ENCODE measurements at regions of chr22 and their contacts with region 1.

Region 1: GRCh38 chr22:29040385-29041275 is 21.0 kb downstream of the C22orf31 start:
- DNase-seq: peak; percentile 36
- ATAC-seq: peak; percentile 92
- H3K4me3 ChIP-seq: no peak overlapping the region
- H3K27ac ChIP-seq: no peak overlapping the region
- H3K4me1 ChIP-seq: no peaks in the 10 kb centered on the region
- H3K27me3 ChIP-seq: no peaks in the 10 kb centered on the region
- CTCF ChIP-seq: peak; percentile 92 to 98 (median 94)
- EP300 ChIP-seq: no peak
- POLR2A ChIP-seq: no peak
- RAD21 ChIP-seq: peak; percentile 97

Region 2: GRCh38 chr22:28034760-28035401 is 1005.7 kb before region 1 on chr22:
- CTCF ChIA-PET with region 1: no interaction called
- POLR2A ChIA-PET with region 1: no interaction called
- RAD21 ChIA-PET with region 1: no interaction called
- SMC1A ChIA-PET with region 1: no interaction called
- in situ Hi-C with region 1: loop called (anchors 25 kb)
- intact Hi-C with region 1: no loop called
- DNase-seq: no peak
- ATAC-seq: no peak
- H3K4me3 ChIP-seq: no peak overlapping the region
- H3K27ac ChIP-seq: no peak overlapping the region
- H3K4me1 ChIP-seq: no peaks in the 10 kb centered on the region
- H3K27me3 ChIP-seq: peaks cover 2% of the 10 kb centered on the region in 2 experiments; a peak in 2 of 4 replicates
- CTCF ChIP-seq: no peak
- EP300 ChIP-seq: no peak
- POLR2A ChIP-seq: no peak
- RAD21 ChIP-seq: no peak

Region 3: DNA sequence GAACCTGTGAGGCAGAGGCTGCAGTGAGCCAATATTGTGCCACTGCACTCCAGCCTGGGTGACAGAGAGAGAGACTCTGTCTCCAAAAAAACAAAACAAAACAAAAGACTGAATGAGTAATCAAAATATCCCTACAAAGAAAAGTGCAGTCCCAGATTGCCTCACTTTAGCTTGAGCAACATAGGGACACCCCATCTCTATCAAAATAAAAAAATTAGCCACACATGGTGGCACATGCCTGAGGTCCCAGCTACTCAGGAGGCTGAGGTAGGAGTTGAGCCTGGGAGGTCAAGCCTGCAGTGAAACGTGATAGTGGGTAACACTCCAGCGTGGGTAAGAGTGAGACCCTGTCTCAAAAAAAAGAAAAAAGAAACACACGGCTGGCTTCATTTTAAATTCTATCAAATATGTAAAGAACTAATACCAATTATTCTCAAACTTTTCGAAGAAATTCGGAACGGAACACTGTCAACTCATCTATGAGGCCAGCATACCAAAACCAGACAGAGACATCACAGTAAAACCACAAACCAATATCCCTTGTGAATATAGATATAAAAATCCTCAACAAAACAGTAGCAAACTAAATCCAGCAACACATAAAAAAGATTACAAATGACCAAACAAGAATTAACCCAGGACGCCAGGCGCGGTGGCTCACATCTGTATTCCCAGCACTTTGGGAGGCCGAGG is 311.9 kb before region 1 on chr22:
- CTCF ChIA-PET with region 1: no interaction called
- POLR2A ChIA-PET with region 1: no interaction called
- RAD21 ChIA-PET with region 1: no interaction called
- SMC1A ChIA-PET with region 1: no interaction called
- in situ Hi-C with region 1: no loop called
- intact Hi-C with region 1: no loop called
- DNase-seq: no peak
- ATAC-seq: no peak
- H3K4me3 ChIP-seq: no peak overlapping the region
- H3K27ac ChIP-seq: no peak overlapping the region
- H3K4me1 ChIP-seq: no peaks in the 10 kb centered on the region
- H3K27me3 ChIP-seq: no peaks in the 10 kb centered on the region
- CTCF ChIP-seq: no peak
- EP300 ChIP-seq: no peak
- POLR2A ChIP-seq: no peak
- RAD21 ChIP-seq: no peak

Region 4: DNA sequence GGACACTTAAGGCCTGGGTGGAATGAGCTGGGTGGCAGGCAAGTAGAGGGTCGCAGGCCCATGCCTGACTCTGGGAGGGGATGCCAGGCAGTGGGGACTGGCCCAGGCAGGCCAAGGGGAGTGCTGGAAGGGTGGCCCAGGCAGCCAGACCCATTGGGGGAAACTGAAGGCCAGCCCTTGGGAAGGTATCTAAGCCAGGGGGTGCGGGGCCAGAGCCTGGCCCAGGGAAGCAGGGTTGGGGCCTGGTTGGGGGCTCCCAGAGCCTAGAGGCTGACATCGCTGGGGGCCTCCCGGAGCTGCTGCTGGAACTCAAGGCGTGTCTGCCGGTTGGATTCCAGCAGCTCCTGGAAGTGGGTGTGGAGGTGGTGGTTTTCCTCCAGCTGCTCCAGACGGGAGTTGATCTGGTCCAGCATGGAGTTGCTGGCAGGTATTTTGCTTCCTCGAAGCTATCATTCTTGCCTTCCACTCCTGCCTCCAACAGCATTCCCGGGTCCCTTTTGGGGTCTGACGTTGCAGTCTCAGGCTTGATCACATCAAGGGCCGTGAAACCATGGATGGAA is 204.9 kb before region 1 on chr22:
- CTCF ChIA-PET with region 1: interaction called, 41 read pairs
- POLR2A ChIA-PET with region 1: no interaction called
- RAD21 ChIA-PET with region 1: interaction called, 6 read pairs
- SMC1A ChIA-PET with region 1: interaction called, 96 read pairs
- in situ Hi-C with region 1: no loop called
- intact Hi-C with region 1: no loop called
- DNase-seq: no peak
- ATAC-seq: no peak
- H3K4me3 ChIP-seq: no peak overlapping the region
- H3K27ac ChIP-seq: no peak overlapping the region
- H3K4me1 ChIP-seq: no peaks in the 10 kb centered on the region
- H3K27me3 ChIP-seq: no peaks in the 10 kb centered on the region
- CTCF ChIP-seq: no peak
- EP300 ChIP-seq: no peak
- POLR2A ChIP-seq: no peak
- RAD21 ChIP-seq: no peak

Region 5: DNA sequence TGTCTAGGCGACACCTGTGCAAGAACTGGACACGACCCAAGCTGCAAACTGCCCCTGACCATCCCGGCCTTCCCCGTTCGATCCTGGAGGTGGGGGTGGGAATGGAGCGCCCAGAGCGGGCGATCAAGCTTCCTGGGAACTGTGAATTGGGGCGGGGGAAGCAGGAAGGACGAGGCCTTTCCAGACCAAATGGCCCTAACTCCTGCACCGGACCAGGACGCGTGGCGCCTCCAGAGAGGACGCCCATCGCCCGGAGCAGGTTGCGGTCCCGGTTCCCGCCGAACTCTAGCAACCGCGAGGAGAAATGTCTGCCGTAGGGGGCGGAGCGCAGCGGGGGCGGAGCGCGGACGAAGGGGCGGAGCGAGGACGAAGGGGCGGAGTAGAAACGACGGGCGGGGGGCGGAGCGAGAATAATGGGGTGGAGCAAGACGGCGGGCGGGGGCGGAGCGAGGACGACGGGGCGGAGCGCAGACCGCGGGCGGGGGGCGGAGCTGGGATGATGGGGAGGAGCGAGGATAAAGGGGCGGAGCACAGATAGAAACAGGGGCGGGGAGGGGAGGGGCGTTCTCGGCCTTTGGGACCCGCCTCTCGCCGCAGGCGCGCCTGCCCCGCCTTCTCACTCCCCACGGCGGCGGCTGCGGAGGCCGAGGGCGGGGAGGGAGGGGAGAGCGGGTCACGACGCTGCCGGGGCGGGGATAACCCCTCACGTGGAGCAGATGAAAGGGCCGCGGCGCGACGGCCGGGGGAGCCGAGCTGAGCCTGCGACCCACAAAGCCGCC is 157.6 kb before region 1 on chr22 and contains the start of gene ZNRF3:
- CTCF ChIA-PET with region 1: interaction called, 36 read pairs
- POLR2A ChIA-PET with region 1: interaction called, 6 read pairs
- RAD21 ChIA-PET with region 1: interaction called, 18 read pairs
- SMC1A ChIA-PET with region 1: interaction called, 21 read pairs
- in situ Hi-C with region 1: no loop called
- intact Hi-C with region 1: no loop called
- DNase-seq: no peak
- ATAC-seq: peak; percentile 89
- H3K4me3 ChIP-seq: peak within 1 kb of the TSS; percentile 57; the same call in 1 of the 2 replicates
- H3K27ac ChIP-seq: no peak within 1 kb of the TSS
- H3K4me1 ChIP-seq: no peaks in the 10 kb centered on the region
- H3K27me3 ChIP-seq: peaks cover 0 to 5% of the 10 kb centered on the region in 2 experiments; a peak in 1 of 4 replicates
- CTCF ChIP-seq: no peak
- EP300 ChIP-seq: no peak
- POLR2A ChIP-seq: peak; percentile 50; the same call in 1 of the 2 replicates
- RAD21 ChIP-seq: no peak
- polyA plus RNA-seq, gene ZNRF3: 0.10 to 0.13 TPM

Region 6: DNA sequence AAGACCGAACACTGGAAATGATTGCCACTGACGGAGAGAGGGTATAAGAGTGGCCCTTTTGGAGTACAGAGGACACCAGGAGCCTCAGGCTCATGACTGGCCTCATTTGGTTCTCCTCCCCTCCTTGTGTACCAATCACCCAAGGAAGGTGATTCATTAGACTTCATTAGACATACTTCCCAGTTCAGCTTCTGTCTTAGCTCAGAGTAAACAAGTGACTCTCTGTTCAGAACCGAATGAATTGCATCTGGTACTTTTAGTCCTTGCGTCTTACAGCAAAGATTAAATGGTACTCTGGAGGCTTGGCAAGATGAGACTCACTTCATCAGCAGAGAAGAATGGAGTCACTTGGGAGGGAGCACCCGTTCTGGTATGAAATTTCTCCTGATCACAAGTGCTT is 82.0 kb before region 1 on chr22:
- CTCF ChIA-PET with region 1: interaction called, 18 read pairs
- POLR2A ChIA-PET with region 1: interaction called, 3 read pairs
- RAD21 ChIA-PET with region 1: interaction called, 6 read pairs
- SMC1A ChIA-PET with region 1: interaction called, 7 read pairs
- in situ Hi-C with region 1: no loop called
- intact Hi-C with region 1: no loop called
- DNase-seq: no peak
- ATAC-seq: no peak
- H3K4me3 ChIP-seq: no peak overlapping the region
- H3K27ac ChIP-seq: no peak overlapping the region
- H3K4me1 ChIP-seq: peaks cover 18% of the 10 kb centered on the region
- H3K27me3 ChIP-seq: peaks cover 0 to 2% of the 10 kb centered on the region in 2 experiments; a peak in 1 of 4 replicates
- CTCF ChIP-seq: no peak
- EP300 ChIP-seq: no peak
- POLR2A ChIP-seq: no peak
- RAD21 ChIP-seq: no peak

Region 7: DNA sequence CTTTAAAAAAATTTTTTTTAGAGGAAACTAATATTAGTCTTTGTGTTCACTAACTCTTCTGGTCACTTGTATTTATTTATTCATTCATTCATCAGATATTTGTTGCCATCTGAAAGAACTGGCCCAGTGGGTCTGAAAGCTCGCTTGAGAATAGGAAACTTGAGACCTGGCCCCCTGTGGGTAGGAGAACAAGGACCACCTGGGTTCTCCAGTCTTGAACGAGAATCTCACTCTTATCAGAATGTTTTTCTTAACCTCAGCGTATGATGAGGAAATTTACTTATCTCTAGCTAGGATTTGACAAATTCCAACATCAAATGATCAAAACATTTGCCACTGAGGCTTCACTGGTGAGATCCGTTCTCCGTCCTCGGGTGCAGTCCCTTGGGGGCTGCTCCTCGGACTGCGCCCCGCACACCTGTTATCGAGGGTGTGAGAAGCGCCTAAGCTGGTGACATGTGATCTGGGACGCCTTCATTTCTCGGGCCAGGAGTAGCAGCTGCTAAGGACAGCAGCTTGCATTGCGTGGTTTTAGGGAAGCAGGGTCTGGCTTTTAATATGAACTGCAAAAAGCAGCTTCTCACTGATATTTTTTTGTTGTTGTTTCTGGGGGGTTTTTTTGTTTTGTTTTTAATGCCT is 14.7 kb after region 1 on chr22:
- CTCF ChIA-PET with region 1: interaction called, 14 read pairs
- POLR2A ChIA-PET with region 1: interaction called, 4 read pairs
- RAD21 ChIA-PET with region 1: interaction called, 5 read pairs
- SMC1A ChIA-PET with region 1: interaction called, 25 read pairs
- in situ Hi-C with region 1: no loop called
- intact Hi-C with region 1: no loop called
- DNase-seq: no peak
- ATAC-seq: no peak
- H3K4me3 ChIP-seq: no peak overlapping the region
- H3K27ac ChIP-seq: no peak overlapping the region
- H3K4me1 ChIP-seq: no peaks in the 10 kb centered on the region
- H3K27me3 ChIP-seq: peaks cover 0 to 2% of the 10 kb centered on the region in 2 experiments; a peak in 1 of 4 replicates
- CTCF ChIP-seq: no peak
- EP300 ChIP-seq: no peak
- POLR2A ChIP-seq: no peak
- RAD21 ChIP-seq: no peak